G401 (cell line): ENCODE measurements at regions of chr10 and their contacts with region 1.

Region 1: GRCh38 chr10:133030781-133031180 is 56.9 kb upstream of the ADGRA1 start:
- DNase-seq: no peak

Region 2: GRCh38 chr10:132951926-132952325 is 78.9 kb before region 1 on chr10:
- in situ Hi-C with region 1: loop called (anchors 5 kb)
- DNase-seq: no peak

Region 3: GRCh38 chr10:133261726-133262325 is 231.0 kb after region 1 on chr10:
- in situ Hi-C with region 1: no loop called
- DNase-seq: peak; percentile 66

Region 4: DNA sequence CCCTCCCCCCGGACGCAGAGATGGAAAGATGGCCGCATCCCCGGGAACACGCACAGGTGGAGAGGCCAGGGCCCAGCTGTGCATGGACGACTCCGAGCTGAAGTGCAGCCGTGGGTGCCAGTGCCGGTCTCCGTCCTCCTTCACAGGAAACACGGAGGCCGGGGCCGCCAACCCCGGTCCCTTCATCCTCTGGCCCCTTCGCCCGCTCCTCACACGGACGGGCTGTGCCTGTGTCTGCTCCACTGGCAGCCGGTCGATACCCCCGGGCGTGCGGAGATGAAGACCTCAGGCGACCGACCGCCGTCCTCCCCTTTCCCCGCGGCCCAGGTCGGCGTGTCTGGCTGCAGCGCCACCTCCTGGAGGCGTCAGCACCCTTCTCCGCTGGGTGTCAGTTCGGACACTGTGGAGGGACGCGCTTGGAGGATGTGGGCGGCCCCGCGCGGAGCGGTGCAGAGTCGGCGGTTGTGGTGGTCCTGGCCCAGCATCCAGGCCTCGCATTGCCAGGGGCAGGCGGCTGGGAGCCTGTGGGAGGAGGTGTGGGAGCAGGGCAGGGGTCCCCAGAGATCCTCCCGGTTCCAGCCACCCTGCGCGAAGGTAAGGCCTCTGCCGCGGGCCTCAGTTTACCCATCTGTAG is 287.8 kb after region 1 on chr10:
- in situ Hi-C with region 1: no loop called
- DNase-seq: peak; percentile 58